Heart right ventricle (tissue), 16 donors: ENCODE measurements at regions of chr6 and their contacts with region 1.

Region 1: GRCh38 chr6:83215131-83216047 is 22.2 kb downstream of the RWDD2A start:
- DNase-seq: peak; percentile 21 to 71
- ATAC-seq: peak; percentile 77 to 97 (median 92)
- H3K4me3 ChIP-seq: no peak overlapping the region
- H3K27ac ChIP-seq: peak overlapping the region in 1 of 10 donors; percentile 8
- H3K4me1 ChIP-seq: peaks cover 0 to 4% (median 0%) of the 10 kb centered on the region in 9 donors
- H3K27me3 ChIP-seq: no peaks in the 10 kb centered on the region
- CTCF ChIP-seq: peak; percentile 53 to 92 (median 80)

Region 2: GRCh38 chr6:82247634-82248232 is 967.7 kb before region 1 on chr6 and contains the start of gene IBTK:
- intact Hi-C with region 1: loop called in 1 of 10 experiments (anchors 10 kb)
- DNase-seq: peak; percentile 95
- ATAC-seq: peak; percentile 97 to 99 (median 99)
- H3K4me3 ChIP-seq: peak within 1 kb of the TSS; percentile 53 to 92 (median 83)
- H3K27ac ChIP-seq: peak within 1 kb of the TSS; percentile 7 to 97 (median 94)
- H3K4me1 ChIP-seq: peaks cover 3 to 49% (median 37%) of the 10 kb centered on the region in 9 donors
- H3K27me3 ChIP-seq: no peaks in the 10 kb centered on the region
- CTCF ChIP-seq: peak in 1 of 9 donors; percentile 1
- total RNA-seq, gene IBTK: 27.4 to 40.1 (median 36.4) TPM

Region 3: DNA sequence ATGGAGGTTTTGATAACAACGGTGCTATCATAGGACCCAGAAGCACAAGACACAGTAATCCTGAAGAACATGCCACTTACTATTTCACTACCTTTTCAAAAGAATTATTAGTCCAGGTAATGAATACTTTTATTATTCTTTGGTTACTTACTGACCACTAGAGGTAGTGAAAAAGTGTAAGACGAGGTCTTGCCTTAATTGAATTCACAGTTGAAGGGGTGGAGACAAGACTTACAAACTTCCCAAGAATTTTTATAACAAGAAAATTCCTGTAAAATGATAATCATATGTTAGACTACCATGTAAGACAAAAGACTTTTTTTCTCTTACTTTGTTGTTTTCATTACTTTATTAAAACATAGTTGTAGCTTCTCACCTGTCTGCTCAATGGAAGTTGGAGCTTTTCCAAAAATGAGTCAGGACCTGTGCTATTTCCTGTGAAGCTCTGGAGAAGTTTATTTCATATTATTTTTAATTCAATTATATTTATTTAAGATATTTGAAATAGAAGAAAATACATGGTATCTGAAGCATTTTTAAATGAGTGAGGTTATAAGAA is 95.6 kb before region 1 on chr6:
- intact Hi-C with region 1: no loop called
- DNase-seq: no peak
- ATAC-seq: no peak
- H3K4me3 ChIP-seq: no peak overlapping the region
- H3K27ac ChIP-seq: no peak overlapping the region
- H3K4me1 ChIP-seq: no peaks in the 10 kb centered on the region
- H3K27me3 ChIP-seq: no peaks in the 10 kb centered on the region
- CTCF ChIP-seq: no peak

Region 4: GRCh38 chr6:83192871-83193746 is 22.3 kb before region 1 on chr6 and contains the starts of genes PGM3 and RWDD2A:
- intact Hi-C with region 1: loop called in 1 of 10 experiments (anchors 1 kb)
- DNase-seq: peak; percentile 91 to 92
- ATAC-seq: peak; percentile 99 to 100 (median 100)
- H3K4me3 ChIP-seq: peak within 1 kb of the TSS; percentile 75 to 95 (median 88)
- H3K27ac ChIP-seq: peak within 1 kb of the TSS; percentile 67 to 92 (median 80)
- H3K4me1 ChIP-seq: peaks cover 0 to 38% (median 22%) of the 10 kb centered on the region in 9 donors
- H3K27me3 ChIP-seq: no peaks in the 10 kb centered on the region
- CTCF ChIP-seq: peak in 1 of 9 donors; percentile 5
- total RNA-seq, gene PGM3: 12.7 to 23.4 (median 17.0) TPM
- total RNA-seq, gene RWDD2A: 2.8 to 4.2 (median 3.4) TPM

Region 5: GRCh38 chr6:83546636-83547035 is 331.2 kb after region 1 on chr6:
- intact Hi-C with region 1: no loop called
- DNase-seq: no peak
- ATAC-seq: no peak
- H3K4me3 ChIP-seq: no peak overlapping the region
- H3K27ac ChIP-seq: no peak overlapping the region
- H3K4me1 ChIP-seq: no peaks in the 10 kb centered on the region
- H3K27me3 ChIP-seq: no peaks in the 10 kb centered on the region
- CTCF ChIP-seq: no peak